CD4-positive, alpha-beta T cell (primary cell): ENCODE measurements at regions of chrX and their contacts with region 1.

Region 1: DNA sequence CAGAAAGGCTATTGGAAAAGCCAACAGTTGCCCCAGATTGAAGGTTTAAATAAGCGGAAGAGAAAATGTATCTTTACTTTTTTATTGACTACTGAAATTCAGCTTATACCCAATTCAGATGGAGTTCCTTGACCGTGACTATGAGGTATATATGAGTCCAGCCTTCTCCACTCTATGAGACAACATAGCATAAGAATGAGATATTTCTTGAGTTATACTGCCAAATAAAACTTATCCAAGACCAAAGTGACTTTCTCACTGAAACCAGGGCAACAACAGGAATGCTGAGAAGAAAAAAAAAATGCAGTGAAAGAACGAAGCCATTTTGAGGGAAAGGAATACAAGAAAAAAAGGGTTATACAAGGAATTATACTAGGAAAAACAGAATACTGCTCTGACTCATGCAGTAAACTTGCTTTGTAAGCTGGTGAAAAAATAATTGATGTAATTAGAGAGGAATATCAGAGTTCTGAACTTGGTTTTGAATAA is 16.3 kb upstream of the PDK3 start:
- DNase-seq: no peak
- ATAC-seq: no peak
- H3K4me3 ChIP-seq: no peak overlapping the region
- H3K4me3 Mint-ChIP-seq: no peak overlapping the region
- H3K27ac ChIP-seq: no peak overlapping the region
- H3K27ac Mint-ChIP-seq: no peak overlapping the region
- H3K4me1 ChIP-seq: no peaks in the 10 kb centered on the region
- H3K4me1 Mint-ChIP-seq: no peaks in the 10 kb centered on the region
- H3K27me3 ChIP-seq: no peaks in the 10 kb centered on the region
- H3K27me3 Mint-ChIP-seq: no peaks in the 10 kb centered on the region
- CTCF ChIP-seq: no peak

Region 2: GRCh38 chrX:23292988-23293651 is 1155.7 kb before region 1 on chrX:
- CTCF ChIA-PET with region 1: no interaction called
- POLR2A ChIA-PET with region 1: no interaction called
- intact Hi-C with region 1: no loop called
- DNase-seq: no peak
- ATAC-seq: no peak
- H3K4me3 ChIP-seq: no peak overlapping the region
- H3K4me3 Mint-ChIP-seq: no peak overlapping the region
- H3K27ac ChIP-seq: no peak overlapping the region
- H3K27ac Mint-ChIP-seq: no peak overlapping the region
- H3K4me1 ChIP-seq: no peaks in the 10 kb centered on the region
- H3K4me1 Mint-ChIP-seq: no peaks in the 10 kb centered on the region
- H3K27me3 ChIP-seq: no peaks in the 10 kb centered on the region
- H3K27me3 Mint-ChIP-seq: no peaks in the 10 kb centered on the region
- CTCF ChIP-seq: no peak

Region 3: GRCh38 chrX:24405959-24406358 is 42.8 kb before region 1 on chrX:
- CTCF ChIA-PET with region 1: no interaction called
- POLR2A ChIA-PET with region 1: no interaction called
- intact Hi-C with region 1: loop called (anchors 5 to 10 kb)
- DNase-seq: no peak
- ATAC-seq: no peak
- H3K4me3 ChIP-seq: no peak overlapping the region
- H3K4me3 Mint-ChIP-seq: no peak overlapping the region
- H3K27ac ChIP-seq: no peak overlapping the region
- H3K27ac Mint-ChIP-seq: no peak overlapping the region
- H3K4me1 ChIP-seq: no peaks in the 10 kb centered on the region
- H3K4me1 Mint-ChIP-seq: no peaks in the 10 kb centered on the region
- H3K27me3 ChIP-seq: no peaks in the 10 kb centered on the region
- H3K27me3 Mint-ChIP-seq: no peaks in the 10 kb centered on the region
- CTCF ChIP-seq: no peak

Region 4: GRCh38 chrX:24412637-24413363 is 36.0 kb before region 1 on chrX:
- CTCF ChIA-PET with region 1: no interaction called
- POLR2A ChIA-PET with region 1: interaction called, 4 read pairs
- intact Hi-C with region 1: loop called (anchors 5 to 10 kb)
- DNase-seq: no peak
- ATAC-seq: no peak
- H3K4me3 ChIP-seq: no peak overlapping the region
- H3K4me3 Mint-ChIP-seq: no peak overlapping the region
- H3K27ac ChIP-seq: no peak overlapping the region
- H3K27ac Mint-ChIP-seq: no peak overlapping the region
- H3K4me1 ChIP-seq: no peaks in the 10 kb centered on the region
- H3K4me1 Mint-ChIP-seq: no peaks in the 10 kb centered on the region
- H3K27me3 ChIP-seq: no peaks in the 10 kb centered on the region
- H3K27me3 Mint-ChIP-seq: no peaks in the 10 kb centered on the region
- CTCF ChIP-seq: no peak